PC-3 (cell line): ENCODE measurements at regions of chr12 and their contacts with region 1.

Region 1: GRCh38 chr12:123905319-123905925 is 67.2 kb downstream of the CCDC92 start:
- DNase-seq: peak; percentile 90
- ATAC-seq: peak; percentile 67
- H3K4me3 ChIP-seq: no peak overlapping the region
- H3K27ac ChIP-seq: no peak overlapping the region
- H3K4me1 ChIP-seq: peaks cover 4% of the 10 kb centered on the region
- H3K27me3 ChIP-seq: no peaks in the 10 kb centered on the region
- CTCF ChIP-seq: peak; percentile 96

Region 2: DNA sequence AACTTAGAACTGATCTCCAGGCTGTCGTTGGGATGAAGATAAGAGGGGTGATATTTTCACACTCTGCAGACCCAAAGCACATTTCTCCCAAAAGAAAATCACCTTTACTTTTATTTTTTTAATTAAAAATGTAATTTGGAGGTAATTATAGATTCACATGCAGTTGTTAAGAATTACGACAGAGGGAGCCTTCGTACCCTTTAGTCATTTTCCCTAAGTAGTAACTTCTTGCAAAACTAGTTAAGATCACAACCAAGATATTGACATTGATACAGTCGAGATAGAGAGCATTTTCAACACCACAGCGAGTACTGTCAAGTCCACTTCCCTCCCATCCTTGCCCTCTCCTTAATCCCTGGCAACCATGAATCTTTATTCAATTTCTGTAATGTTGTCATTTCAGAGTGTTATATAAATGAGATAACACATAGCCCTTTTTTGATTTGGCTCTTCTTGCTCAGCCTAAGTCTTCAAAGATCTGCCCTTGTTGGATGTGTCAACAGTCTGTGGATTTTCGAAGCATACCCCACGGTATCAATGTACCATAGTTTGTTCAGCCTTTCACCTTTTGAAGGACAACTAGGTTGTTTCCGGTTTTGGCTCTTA is 103.7 kb before region 1 on chr12:
- CTCF ChIA-PET with region 1: no interaction called
- POLR2A ChIA-PET with region 1: no interaction called
- intact Hi-C with region 1: loop called (anchors 5 kb)
- DNase-seq: peak; percentile 72
- ATAC-seq: peak; percentile 62
- H3K4me3 ChIP-seq: no peak overlapping the region
- H3K27ac ChIP-seq: no peak overlapping the region
- H3K4me1 ChIP-seq: no peaks in the 10 kb centered on the region
- H3K27me3 ChIP-seq: no peaks in the 10 kb centered on the region
- CTCF ChIP-seq: peak; percentile 76

Region 3: GRCh38 chr12:123952037-123952436 is 46.6 kb after region 1 on chr12:
- CTCF ChIA-PET with region 1: no interaction called
- POLR2A ChIA-PET with region 1: no interaction called
- intact Hi-C with region 1: loop called (anchors 1 kb)
- DNase-seq: peak; percentile 83
- ATAC-seq: peak; percentile 95
- H3K4me3 ChIP-seq: no peak overlapping the region
- H3K27ac ChIP-seq: peak overlapping the region; percentile 52
- H3K4me1 ChIP-seq: peaks cover 19% of the 10 kb centered on the region
- H3K27me3 ChIP-seq: no peaks in the 10 kb centered on the region
- CTCF ChIP-seq: no peak

Region 4: GRCh38 chr12:123972457-123973401 is 67.3 kb after region 1 on chr12 and contains the starts of genes CCDC92 and ZNF664:
- CTCF ChIA-PET with region 1: interaction called, 7 read pairs
- POLR2A ChIA-PET with region 1: no interaction called
- intact Hi-C with region 1: loop called (anchors 1 kb)
- DNase-seq: peak; percentile 96
- ATAC-seq: peak; percentile 74
- H3K4me3 ChIP-seq: peak within 1 kb of the TSS; percentile 85
- H3K27ac ChIP-seq: peak within 1 kb of the TSS; percentile 4
- H3K4me1 ChIP-seq: peaks cover 44% of the 10 kb centered on the region
- H3K27me3 ChIP-seq: no peaks in the 10 kb centered on the region
- CTCF ChIP-seq: no peak
- total RNA-seq, gene CCDC92: 9.6 and 9.7 TPM in 2 replicates
- total RNA-seq, gene ZNF664: 80.8 and 86.9 TPM in 2 replicates

Region 5: DNA sequence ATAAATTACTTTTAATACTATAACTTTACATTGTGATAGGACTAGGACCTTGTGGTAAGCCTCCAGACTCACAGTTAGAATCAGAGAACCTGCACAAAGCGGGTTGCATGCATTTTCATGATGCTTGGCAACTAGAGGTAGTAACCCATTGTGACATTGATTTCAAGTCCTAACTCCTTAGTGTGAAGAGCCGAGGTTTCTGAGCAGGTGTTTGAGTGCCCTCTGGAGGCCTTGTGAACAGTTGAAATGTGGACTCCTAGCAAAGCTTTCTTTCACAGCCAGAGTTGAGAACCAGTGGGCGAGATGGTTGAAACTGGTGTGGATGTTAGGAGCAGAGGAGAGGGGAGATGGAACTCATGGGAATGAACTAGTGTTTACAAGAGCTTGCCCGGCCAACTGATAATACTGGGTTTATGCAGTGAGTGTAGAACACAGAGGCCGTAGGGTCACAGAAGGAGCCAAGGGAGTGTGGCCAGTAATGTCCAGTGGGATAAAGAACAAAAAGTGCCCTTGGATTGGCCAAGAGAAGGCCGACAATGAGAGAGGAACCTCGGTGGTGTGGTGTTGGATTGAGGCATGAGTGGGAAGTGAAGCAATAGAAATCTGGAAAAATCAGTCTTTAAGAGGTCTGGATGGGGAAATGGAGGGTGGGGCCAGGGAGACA is 78.5 kb after region 1 on chr12:
- CTCF ChIA-PET with region 1: interaction called, 8 read pairs
- POLR2A ChIA-PET with region 1: no interaction called
- intact Hi-C with region 1: loop called (anchors 1 kb)
- DNase-seq: peak; percentile 84
- ATAC-seq: peak; percentile 93
- H3K4me3 ChIP-seq: no peak overlapping the region
- H3K27ac ChIP-seq: no peak overlapping the region
- H3K4me1 ChIP-seq: no peaks in the 10 kb centered on the region
- H3K27me3 ChIP-seq: no peaks in the 10 kb centered on the region
- CTCF ChIP-seq: peak; percentile 96